CD8-positive, alpha-beta memory T cell (primary cell): ENCODE measurements at regions of chr19 and their contacts with region 1.

Region 1: GRCh38 chr19:10717356-10718204 is at the start of gene DNM2:
- DNase-seq: peak; percentile 92 to 99 (median 98)
- H3K4me3 ChIP-seq: peak within 1 kb of the TSS; percentile 76
- H3K4me3 Mint-ChIP-seq: peak within 1 kb of the TSS; percentile 88 to 99 (median 95)
- H3K27ac ChIP-seq: peak within 1 kb of the TSS; percentile 90
- H3K27ac Mint-ChIP-seq: peak within 1 kb of the TSS; percentile 83 to 99 (median 96)
- H3K4me1 ChIP-seq: peaks cover 36% of the 10 kb centered on the region
- H3K4me1 Mint-ChIP-seq: peaks cover 31 to 46% (median 42%) of the 10 kb centered on the region in 3 donors
- H3K27me3 ChIP-seq: no peaks in the 10 kb centered on the region
- H3K27me3 Mint-ChIP-seq: no peaks in the 10 kb centered on the region
- total RNA-seq, gene DNM2: 154 to 165 TPM

Region 2: DNA sequence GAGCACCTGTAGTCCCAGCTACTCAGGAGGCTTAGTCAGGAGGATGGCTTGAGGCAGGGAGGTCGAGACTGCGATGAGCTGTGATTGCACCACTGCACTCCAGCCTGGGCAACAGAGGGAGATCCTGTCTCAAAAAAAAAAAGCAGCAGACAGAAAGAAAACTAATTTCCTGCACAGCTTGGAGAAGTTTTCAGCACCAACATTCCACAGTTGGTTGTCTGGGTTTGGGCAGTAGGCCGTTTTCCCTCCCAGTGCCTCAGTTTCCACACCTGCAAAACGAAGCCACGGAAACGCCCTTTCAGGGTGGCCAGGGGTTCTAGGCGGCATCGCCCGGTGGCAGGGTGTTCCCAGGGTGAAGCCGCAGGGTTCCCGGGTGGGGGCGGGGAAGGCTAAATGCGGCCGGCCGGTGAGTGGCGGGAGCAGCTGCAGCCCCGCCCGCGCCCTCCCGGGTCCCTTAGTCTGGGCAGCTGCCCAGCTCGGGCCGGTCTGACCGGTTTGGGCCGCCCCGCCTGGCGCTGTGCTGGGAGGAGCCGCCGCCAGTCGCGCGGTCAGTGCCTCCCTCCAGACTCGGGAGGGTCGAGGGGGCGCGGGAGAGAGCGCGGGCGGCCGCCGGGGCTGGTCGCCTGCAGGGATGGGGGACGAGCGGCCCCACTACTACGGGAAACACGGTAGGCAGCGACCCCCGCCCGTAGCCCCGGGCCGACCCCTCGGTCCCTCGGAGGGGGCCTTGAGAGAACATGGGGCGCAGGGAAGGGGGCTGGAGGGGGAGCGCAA is 92.4 kb before region 1 on chr19 and contains the start of gene SLC44A2:
- CTCF ChIA-PET with region 1: no interaction called
- POLR2A ChIA-PET with region 1: no interaction called
- DNase-seq: no peak
- H3K4me3 ChIP-seq: no peak within 1 kb of the TSS
- H3K4me3 Mint-ChIP-seq: peak within 1 kb of the TSS in 6 of 7 donors; percentile 13 to 82 (median 41)
- H3K27ac ChIP-seq: no peak within 1 kb of the TSS
- H3K27ac Mint-ChIP-seq: peak within 1 kb of the TSS; percentile 68 to 92 (median 84)
- H3K4me1 ChIP-seq: peaks cover 30% of the 10 kb centered on the region
- H3K4me1 Mint-ChIP-seq: peaks cover 33 to 47% (median 43%) of the 10 kb centered on the region in 3 donors
- H3K27me3 ChIP-seq: no peaks in the 10 kb centered on the region
- H3K27me3 Mint-ChIP-seq: no peaks in the 10 kb centered on the region
- total RNA-seq, gene SLC44A2: 70.5 to 88.2 TPM

Region 3: DNA sequence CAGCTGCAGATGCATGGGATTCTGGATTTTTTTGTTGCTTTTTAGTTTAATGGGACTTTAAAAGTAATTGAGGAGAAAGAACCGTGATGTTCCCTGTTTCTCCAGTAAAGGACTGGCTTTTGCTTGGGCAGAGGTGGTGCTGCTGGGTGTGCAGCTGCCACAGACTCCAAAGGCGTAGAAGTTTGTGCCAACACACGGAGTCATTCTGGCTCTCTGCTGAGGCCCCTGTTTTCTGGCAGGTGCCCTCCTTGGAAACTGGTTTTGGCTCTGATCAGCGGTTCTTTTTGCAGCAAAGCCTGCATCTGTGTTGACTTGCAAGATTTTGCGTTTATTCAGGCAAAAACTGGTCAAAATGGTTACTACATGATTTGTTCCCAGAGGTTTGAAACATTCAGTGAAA is 32.4 kb before region 1 on chr19:
- CTCF ChIA-PET with region 1: no interaction called
- POLR2A ChIA-PET with region 1: no interaction called
- DNase-seq: no peak
- H3K4me3 ChIP-seq: no peak overlapping the region
- H3K4me3 Mint-ChIP-seq: no peak overlapping the region
- H3K27ac ChIP-seq: no peak overlapping the region
- H3K27ac Mint-ChIP-seq: no peak overlapping the region
- H3K4me1 ChIP-seq: no peaks in the 10 kb centered on the region
- H3K4me1 Mint-ChIP-seq: peaks cover 0 to 3% (median 0%) of the 10 kb centered on the region in 3 donors
- H3K27me3 ChIP-seq: no peaks in the 10 kb centered on the region
- H3K27me3 Mint-ChIP-seq: no peaks in the 10 kb centered on the region

Region 4: GRCh38 chr19:10695401-10696398 is 21.9 kb before region 1 on chr19:
- CTCF ChIA-PET with region 1: interaction called, 65 read pairs
- POLR2A ChIA-PET with region 1: no interaction called
- DNase-seq: peak; percentile 78 to 90 (median 82)
- H3K4me3 ChIP-seq: peak overlapping the region; percentile 43
- H3K4me3 Mint-ChIP-seq: peak overlapping the region; percentile 66 to 88 (median 86)
- H3K27ac ChIP-seq: no peak overlapping the region
- H3K27ac Mint-ChIP-seq: peak overlapping the region in 5 of 8 donors; percentile 44 to 78 (median 64)
- H3K4me1 ChIP-seq: peaks cover 6% of the 10 kb centered on the region
- H3K4me1 Mint-ChIP-seq: peaks cover 15 to 22% (median 16%) of the 10 kb centered on the region in 3 donors
- H3K27me3 ChIP-seq: no peaks in the 10 kb centered on the region
- H3K27me3 Mint-ChIP-seq: peaks cover 5 to 10% of the 10 kb centered on the region in 2 donors

Region 5: GRCh38 chr19:10730923-10731322 is 13.3 kb after region 1 on chr19:
- CTCF ChIA-PET with region 1: no interaction called
- POLR2A ChIA-PET with region 1: interaction called, 15 read pairs
- DNase-seq: peak in 1 of 5 donors; percentile 8
- H3K4me3 ChIP-seq: peak overlapping the region; percentile 8
- H3K4me3 Mint-ChIP-seq: peak overlapping the region in 4 of 7 donors; percentile 11 to 90 (median 76)
- H3K27ac ChIP-seq: peak overlapping the region; percentile 59
- H3K27ac Mint-ChIP-seq: peak overlapping the region; percentile 91 to 99 (median 98)
- H3K4me1 ChIP-seq: peaks cover 33% of the 10 kb centered on the region
- H3K4me1 Mint-ChIP-seq: peaks cover 49 to 66% (median 54%) of the 10 kb centered on the region in 3 donors
- H3K27me3 ChIP-seq: no peaks in the 10 kb centered on the region
- H3K27me3 Mint-ChIP-seq: no peaks in the 10 kb centered on the region

Region 6: DNA sequence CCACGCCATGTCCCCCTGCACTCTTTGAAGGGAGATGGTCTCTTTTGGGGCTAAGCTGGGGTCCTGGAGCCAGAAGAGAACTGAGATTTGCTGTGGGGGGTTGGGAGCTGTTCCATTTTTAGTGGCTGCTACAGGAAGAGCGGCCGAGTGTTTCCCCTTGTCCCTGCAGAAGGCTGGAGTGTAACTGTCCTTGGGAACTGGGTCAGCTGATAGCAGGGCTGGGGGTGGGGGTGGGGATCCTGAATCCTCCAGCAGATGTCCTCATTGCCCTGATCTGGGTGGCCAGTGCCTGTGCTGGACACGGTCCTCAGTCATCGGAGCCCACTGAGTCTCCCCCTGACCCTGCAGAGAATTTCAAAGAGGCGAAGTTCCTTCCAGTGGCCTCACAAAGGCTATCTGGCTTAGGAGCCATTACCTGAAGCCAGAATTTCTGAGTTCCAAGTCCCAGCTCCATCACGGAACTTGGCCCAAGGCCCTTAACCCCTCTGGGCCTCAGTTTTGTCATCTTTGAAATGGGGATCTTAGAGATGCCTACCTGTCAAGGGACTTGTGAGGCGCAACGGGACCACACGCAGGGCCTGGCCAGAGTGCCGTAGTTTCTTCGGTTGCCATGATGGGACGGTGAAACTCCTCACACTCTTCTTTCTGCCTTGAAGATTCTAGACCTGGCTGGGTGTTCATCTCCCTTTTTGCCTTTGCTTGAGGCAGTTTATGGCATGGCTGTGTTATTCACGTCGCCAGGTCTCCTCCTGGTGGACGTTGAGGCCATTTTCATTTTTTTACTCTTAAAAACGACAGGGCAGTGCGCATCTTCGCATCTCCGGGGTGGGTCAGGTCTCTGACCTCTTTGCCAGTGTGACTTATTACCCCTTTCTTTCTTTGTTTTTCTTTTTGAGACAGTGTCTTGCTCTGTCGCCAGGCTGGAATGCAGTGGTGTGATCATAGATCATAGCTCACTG is 52.2 kb after region 1 on chr19:
- CTCF ChIA-PET with region 1: interaction called, 32 read pairs
- POLR2A ChIA-PET with region 1: interaction called, 3 read pairs
- DNase-seq: peak in 1 of 5 donors; percentile 33
- H3K4me3 ChIP-seq: no peak overlapping the region
- H3K4me3 Mint-ChIP-seq: no peak overlapping the region
- H3K27ac ChIP-seq: no peak overlapping the region
- H3K27ac Mint-ChIP-seq: peak overlapping the region in 6 of 8 donors; percentile 6 to 80 (median 56)
- H3K4me1 ChIP-seq: peaks cover 8% of the 10 kb centered on the region
- H3K4me1 Mint-ChIP-seq: peaks cover 20 to 58% (median 28%) of the 10 kb centered on the region in 3 donors
- H3K27me3 ChIP-seq: no peaks in the 10 kb centered on the region
- H3K27me3 Mint-ChIP-seq: no peaks in the 10 kb centered on the region

Region 7: DNA sequence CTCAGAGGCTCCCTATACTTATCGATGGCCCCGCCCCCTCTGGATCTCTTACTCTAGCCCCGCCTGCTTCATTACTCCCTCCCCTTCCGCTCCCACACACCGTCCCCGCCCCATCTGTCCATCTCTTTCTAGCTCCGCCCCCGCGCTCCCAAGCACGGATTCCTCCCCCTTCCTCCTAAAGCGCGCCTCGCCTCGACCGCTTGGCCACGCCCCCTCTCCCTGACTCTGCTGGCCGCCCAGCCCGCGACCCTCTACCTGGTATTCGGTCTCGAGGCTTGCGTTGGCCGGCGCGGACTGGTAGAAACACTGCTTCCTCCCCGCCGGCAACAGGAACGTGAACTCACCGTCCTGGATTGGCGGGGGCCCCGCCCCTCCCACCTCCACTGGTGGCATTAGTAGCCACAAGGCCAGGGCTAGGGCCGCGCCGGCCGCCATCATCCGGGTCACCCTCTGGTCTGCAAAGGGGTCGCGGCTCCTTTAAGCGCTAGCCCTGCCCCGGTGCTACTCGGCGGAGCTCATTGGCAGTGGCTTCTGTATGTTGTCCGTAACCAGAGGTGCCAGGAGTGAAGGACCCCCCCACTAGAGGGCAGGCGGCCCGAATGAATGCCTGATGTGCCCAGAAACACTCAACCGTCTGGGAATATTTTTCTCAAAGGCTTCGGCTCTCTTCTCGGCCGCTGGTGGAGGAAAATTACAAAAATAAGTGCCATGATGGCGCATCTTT is 118.3 kb after region 1 on chr19 and contains the start of gene TMED1:
- CTCF ChIA-PET with region 1: interaction called, 23 read pairs
- POLR2A ChIA-PET with region 1: interaction called, 11 read pairs
- DNase-seq: peak; percentile 93 to 94 (median 94)
- H3K4me3 ChIP-seq: peak within 1 kb of the TSS; percentile 93
- H3K4me3 Mint-ChIP-seq: peak within 1 kb of the TSS; percentile 88 to 98 (median 97)
- H3K27ac ChIP-seq: peak within 1 kb of the TSS; percentile 95
- H3K27ac Mint-ChIP-seq: peak within 1 kb of the TSS; percentile 97 to 100 (median 99)
- H3K4me1 ChIP-seq: peaks cover 7% of the 10 kb centered on the region
- H3K4me1 Mint-ChIP-seq: peaks cover 14 to 20% (median 15%) of the 10 kb centered on the region in 3 donors
- H3K27me3 ChIP-seq: no peaks in the 10 kb centered on the region
- H3K27me3 Mint-ChIP-seq: peaks cover 0 to 8% of the 10 kb centered on the region in 2 donors
- total RNA-seq, gene TMED1: 15.7 to 16.6 TPM

Region 8: GRCh38 chr19:10864538-10864899 is 146.9 kb after region 1 on chr19:
- CTCF ChIA-PET with region 1: interaction called, 97 read pairs
- POLR2A ChIA-PET with region 1: interaction called, 7 read pairs
- DNase-seq: peak; percentile 68 to 83 (median 73)
- H3K4me3 ChIP-seq: no peak overlapping the region
- H3K4me3 Mint-ChIP-seq: peak overlapping the region in 3 of 7 donors; percentile 14 to 78 (median 61)
- H3K27ac ChIP-seq: no peak overlapping the region
- H3K27ac Mint-ChIP-seq: peak overlapping the region in 4 of 8 donors; percentile 44 to 86 (median 77)
- H3K4me1 ChIP-seq: peaks cover 10% of the 10 kb centered on the region
- H3K4me1 Mint-ChIP-seq: peaks cover 8 to 21% (median 11%) of the 10 kb centered on the region in 3 donors
- H3K27me3 ChIP-seq: no peaks in the 10 kb centered on the region
- H3K27me3 Mint-ChIP-seq: no peaks in the 10 kb centered on the region